Heart left ventricle (tissue), 16 donors: ENCODE measurements at regions of chr16 and their contacts with region 1.

Region 1: GRCh38 chr16:22217889-22218730 is 12.0 kb downstream of the EEF2K start:
- DNase-seq: peak; percentile 46 to 63 (median 57)
- ATAC-seq: peak in 2 of 4 donors; percentile 15 to 43
- H3K4me3 ChIP-seq: no peak overlapping the region
- H3K27ac ChIP-seq: peak overlapping the region in 5 of 12 donors; percentile 14 to 73 (median 34)
- H3K4me1 ChIP-seq: peaks cover 0 to 43% (median 27%) of the 10 kb centered on the region in 12 donors
- H3K27me3 ChIP-seq: no peaks in the 10 kb centered on the region
- CTCF ChIP-seq: no peak
- POLR2A ChIP-seq: no peak

Region 2: DNA sequence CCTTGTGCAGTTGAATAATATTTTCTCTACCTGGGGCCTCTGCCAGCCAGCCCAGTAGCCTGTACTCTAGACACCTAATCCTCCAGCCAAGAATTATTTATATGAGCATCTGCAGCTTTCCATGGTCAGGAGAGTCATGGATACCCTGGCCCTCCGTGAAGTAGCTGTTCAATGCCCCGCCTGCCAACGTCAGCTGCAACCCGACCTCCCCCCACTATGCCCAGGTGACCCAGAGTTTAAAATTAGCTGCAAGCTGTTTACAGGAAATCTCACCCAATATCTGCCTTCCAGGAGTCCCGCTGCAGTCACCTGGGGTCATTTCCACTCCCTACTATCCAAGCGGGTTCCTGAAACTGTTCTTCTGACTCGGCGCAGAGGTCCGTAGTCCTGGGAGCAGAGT is 43.5 kb before region 1 on chr16:
- intact Hi-C with region 1: no loop called
- DNase-seq: peak in 1 of 5 donors; percentile 23
- ATAC-seq: no peak
- H3K4me3 ChIP-seq: no peak overlapping the region
- H3K27ac ChIP-seq: no peak overlapping the region
- H3K4me1 ChIP-seq: no peaks in the 10 kb centered on the region
- H3K27me3 ChIP-seq: no peaks in the 10 kb centered on the region
- CTCF ChIP-seq: no peak
- POLR2A ChIP-seq: no peak

Region 3: DNA sequence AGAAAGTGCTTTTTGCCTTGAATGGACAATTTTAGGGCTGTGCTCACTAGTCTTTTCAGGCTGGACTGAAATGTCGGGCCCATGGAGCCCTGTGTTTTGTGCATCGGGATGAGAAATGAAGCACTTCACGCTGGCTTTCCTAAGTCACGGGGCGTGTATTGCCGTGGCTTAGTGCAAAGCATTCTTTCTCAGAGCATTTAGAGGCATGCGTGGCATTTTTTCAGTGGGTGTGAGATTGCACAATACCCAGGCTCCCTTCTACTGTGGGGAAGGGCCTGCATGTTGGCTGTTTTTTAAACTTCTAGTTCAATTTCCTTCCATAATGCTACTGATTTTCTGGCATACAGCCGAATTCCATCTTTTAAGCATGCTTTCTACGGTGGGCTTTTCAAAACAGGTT is 66.5 kb after region 1 on chr16:
- intact Hi-C with region 1: loop called in 1 of 10 experiments (anchors 5 kb)
- DNase-seq: no peak
- ATAC-seq: no peak
- H3K4me3 ChIP-seq: no peak overlapping the region
- H3K27ac ChIP-seq: no peak overlapping the region
- H3K4me1 ChIP-seq: no peaks in the 10 kb centered on the region
- H3K27me3 ChIP-seq: no peaks in the 10 kb centered on the region
- CTCF ChIP-seq: no peak
- POLR2A ChIP-seq: no peak

Region 4: DNA sequence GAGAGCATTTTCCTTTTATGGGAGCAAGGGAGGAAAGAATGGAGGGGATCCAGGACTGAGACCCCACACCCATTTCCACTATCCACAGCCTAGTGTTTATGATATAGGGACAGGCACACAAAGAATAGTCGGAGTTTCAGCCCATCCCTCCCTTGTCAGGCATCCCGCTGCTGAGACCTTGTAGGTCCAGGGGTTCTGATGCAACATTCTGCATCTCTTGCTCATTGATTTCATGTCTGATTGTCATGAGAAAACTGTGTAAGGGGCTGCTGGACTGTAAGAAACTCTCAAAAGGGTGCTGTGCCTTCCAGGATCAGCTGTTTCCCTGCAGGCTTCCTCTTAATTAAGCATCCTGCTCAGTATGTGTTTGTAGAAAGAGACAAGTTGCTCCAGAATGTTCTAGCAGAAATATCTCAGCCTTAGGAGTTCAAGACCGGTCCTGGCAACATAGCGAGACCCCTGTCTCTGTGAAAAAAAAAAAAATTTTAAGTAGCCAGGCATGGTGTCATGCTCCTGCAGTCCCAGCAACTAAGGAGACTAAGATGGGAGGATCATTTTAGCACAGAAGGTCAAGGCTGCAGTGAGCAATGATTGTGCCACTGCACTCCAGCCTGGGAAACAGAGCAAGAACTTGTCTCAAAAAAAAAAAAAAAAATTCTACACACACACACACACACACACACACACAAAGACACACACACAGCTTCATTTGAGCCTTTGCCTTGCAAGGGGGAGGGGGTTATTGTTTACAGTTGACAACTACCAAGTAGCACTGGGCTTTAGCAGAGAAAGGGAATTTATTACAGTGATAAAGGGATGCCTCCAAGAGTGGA is 74.0 kb after region 1 on chr16:
- intact Hi-C with region 1: loop called in 2 of 10 experiments (anchors 5 kb)
- DNase-seq: no peak
- ATAC-seq: no peak
- H3K4me3 ChIP-seq: no peak overlapping the region
- H3K27ac ChIP-seq: no peak overlapping the region
- H3K4me1 ChIP-seq: peaks cover 0 to 9% (median 1%) of the 10 kb centered on the region in 12 donors
- H3K27me3 ChIP-seq: no peaks in the 10 kb centered on the region
- CTCF ChIP-seq: no peak
- POLR2A ChIP-seq: no peak

Region 5: GRCh38 chr16:22397464-22397863 is 179.4 kb after region 1 on chr16:
- intact Hi-C with region 1: no loop called
- DNase-seq: no peak
- ATAC-seq: no peak
- H3K4me3 ChIP-seq: no peak overlapping the region
- H3K27ac ChIP-seq: no peak overlapping the region
- H3K4me1 ChIP-seq: peaks cover 0 to 15% (median 0%) of the 10 kb centered on the region in 12 donors
- H3K27me3 ChIP-seq: no peaks in the 10 kb centered on the region
- CTCF ChIP-seq: no peak
- POLR2A ChIP-seq: no peak